ENCODE measurements at regions of chr15 and their contacts with region 1.

Region 1: DNA sequence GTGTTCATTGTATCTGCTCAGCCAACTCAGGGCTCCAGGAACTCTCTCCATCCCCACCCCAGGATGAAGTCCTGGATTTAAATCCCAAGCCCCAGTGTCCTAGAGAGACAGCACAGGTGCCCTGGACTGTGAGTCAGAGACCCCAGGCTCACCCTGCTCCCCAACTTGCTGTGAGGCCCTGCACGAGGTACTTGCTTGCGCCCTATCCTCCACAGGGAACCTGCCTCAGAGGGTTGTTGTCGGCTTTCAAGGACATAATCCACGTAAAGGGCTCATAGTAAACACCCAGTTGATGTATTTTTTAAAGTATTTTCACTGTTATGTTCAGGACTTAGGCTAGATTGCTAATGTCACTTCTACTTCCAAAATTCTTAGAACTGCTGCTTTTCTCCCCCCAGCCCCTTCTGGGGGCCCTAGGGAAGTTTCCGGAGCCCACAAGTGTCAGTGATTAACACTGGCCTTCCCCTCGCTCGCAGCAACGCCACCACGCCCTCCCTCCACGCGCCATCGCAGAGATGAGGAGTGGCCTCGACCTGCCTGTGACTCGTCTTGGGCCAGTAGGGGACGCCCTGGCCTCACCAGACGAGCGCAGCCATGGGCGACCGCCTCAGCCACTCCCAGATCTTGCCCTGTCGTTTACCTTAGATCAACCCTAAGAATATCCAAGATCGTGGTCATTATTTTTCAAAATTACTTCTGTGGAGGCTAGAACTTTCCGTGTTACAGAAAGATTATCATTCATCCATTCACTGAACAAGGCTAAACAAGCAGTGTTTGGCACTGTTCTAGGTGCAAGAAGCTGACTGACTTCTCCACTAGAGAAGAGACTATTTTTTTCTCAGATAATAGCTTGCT is 6.0 kb upstream of the SRP14 start:
- DNase-seq: peak; percentile 92
- ATAC-seq: peak; percentile 94 to 95
- H3K4me3 ChIP-seq: peak overlapping the region; percentile 1
- H3K27ac ChIP-seq: peak overlapping the region; percentile 66
- H3K4me1 ChIP-seq: peaks cover 59% of the 10 kb centered on the region
- H3K27me3 ChIP-seq: no peaks in the 10 kb centered on the region
- CTCF ChIP-seq: peak; percentile 95

Region 2: DNA sequence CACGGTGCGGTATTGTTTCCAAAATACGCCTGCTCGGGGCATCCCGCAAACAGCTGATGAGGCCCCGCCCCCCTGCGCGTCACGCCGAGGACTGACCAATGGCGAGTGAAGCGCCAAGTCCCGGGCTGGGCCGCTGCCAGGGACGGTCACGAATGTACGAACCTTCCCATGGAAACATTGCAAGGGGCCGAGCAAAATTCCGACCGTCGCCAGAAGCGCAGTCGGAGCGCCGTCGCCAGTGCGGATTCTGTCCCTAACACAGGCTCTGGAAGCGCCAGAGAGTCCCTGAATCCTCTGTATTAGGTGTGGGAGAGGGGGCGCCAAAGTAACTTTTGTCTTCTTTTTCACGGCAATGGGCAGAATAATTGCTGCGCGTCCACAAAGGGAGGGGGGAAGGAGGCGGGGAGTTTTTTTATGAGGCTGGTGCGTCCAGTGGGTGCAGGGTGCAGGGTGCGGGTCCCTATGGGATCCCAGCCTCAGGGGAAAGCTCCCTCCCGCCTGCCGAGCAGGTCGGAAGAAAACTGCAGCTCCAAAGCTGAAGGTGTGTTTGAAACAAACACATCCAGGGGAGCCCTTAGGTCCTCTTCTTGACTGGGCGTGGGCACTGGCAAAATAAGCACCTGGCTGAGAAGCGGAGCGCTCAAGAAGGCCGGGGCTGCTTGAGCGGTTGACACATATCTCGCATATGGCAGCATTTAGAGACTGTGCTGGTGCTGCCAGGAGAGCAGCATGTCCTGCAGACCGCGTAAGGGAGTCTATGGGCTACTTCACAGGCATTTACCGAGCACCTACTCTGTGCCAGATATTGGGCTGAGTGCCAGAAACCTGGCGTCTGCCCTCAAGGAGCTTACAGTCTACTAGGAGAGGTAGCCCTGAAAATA is 64.2 kb after region 1 on chr15 and contains the start of gene BMF:
- intact Hi-C with region 1: loop called (anchors 10 kb)
- DNase-seq: peak; percentile 100
- ATAC-seq: peak; percentile 90 to 91
- H3K4me3 ChIP-seq: peak within 1 kb of the TSS; percentile 84
- H3K27ac ChIP-seq: peak within 1 kb of the TSS; percentile 90
- H3K4me1 ChIP-seq: peaks cover 42% of the 10 kb centered on the region
- H3K27me3 ChIP-seq: peaks cover 4% of the 10 kb centered on the region
- CTCF ChIP-seq: peak; percentile 29
- total RNA-seq, gene BMF: 17.2 TPM

Region 3: GRCh38 chr15:40274350-40275274 is 229.7 kb after region 1 on chr15:
- intact Hi-C with region 1: loop called (anchors 10 kb)
- DNase-seq: peak; percentile 85
- ATAC-seq: peak; percentile 73 to 88
- H3K4me3 ChIP-seq: no peak overlapping the region
- H3K27ac ChIP-seq: no peak overlapping the region
- H3K4me1 ChIP-seq: peaks cover 18% of the 10 kb centered on the region
- H3K27me3 ChIP-seq: peaks cover 21% of the 10 kb centered on the region
- CTCF ChIP-seq: peak; percentile 100

Measured in lower lobe of right lung (tissue), 2 donors.